ENCODE measurements at regions of chr6 and their contacts with region 1.

Region 1: GRCh38 chr6:148746363-148747144 is at the start of gene UST:
- DNase-seq: peak; percentile 75 to 86 (median 81)
- H3K4me3 ChIP-seq: peak within 1 kb of the TSS; percentile 31 to 71
- H3K4me3 Mint-ChIP-seq: peak within 1 kb of the TSS; percentile 93 to 99 (median 96)
- H3K27ac ChIP-seq: peak within 1 kb of the TSS; percentile 67
- H3K27ac Mint-ChIP-seq: peak within 1 kb of the TSS; percentile 93 to 97 (median 96)
- H3K4me1 ChIP-seq: peaks cover 35% of the 10 kb centered on the region
- H3K4me1 Mint-ChIP-seq: peaks cover 22 to 48% (median 40%) of the 10 kb centered on the region in 4 donors
- H3K27me3 ChIP-seq: no peaks in the 10 kb centered on the region
- H3K27me3 Mint-ChIP-seq: no peaks in the 10 kb centered on the region
- total RNA-seq, gene UST: 7.0 to 7.6 TPM

Region 2: DNA sequence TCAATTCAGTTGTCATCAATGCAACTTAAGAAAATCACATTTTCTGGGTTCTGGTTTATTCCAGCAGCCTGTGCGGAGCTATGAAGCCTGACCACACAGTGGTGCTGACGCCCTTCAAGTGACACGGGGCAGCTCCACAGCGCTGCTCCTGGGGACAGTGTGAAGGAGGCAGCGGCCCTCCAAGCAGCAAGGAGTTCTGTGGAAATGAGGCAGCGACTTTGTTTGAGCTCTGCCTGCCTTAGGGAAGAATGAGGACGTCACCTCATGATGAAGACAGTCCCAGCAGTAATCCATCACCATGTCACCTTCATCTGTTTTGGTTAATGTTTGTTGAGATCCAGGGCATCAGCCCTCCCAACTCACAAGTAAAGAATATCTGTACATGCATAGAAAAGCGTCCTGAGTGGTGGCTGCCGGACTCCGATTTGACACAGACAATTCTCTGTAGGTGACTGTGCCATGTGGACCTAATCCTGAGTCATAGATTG is 168.3 kb before region 1 on chr6:
- CTCF ChIA-PET with region 1: no interaction called
- POLR2A ChIA-PET with region 1: no interaction called
- intact Hi-C with region 1: loop called (anchors 1 kb)
- DNase-seq: peak in 4 of 5 donors; percentile 28 to 46 (median 41)
- H3K4me3 ChIP-seq: no peak overlapping the region
- H3K4me3 Mint-ChIP-seq: no peak overlapping the region
- H3K27ac ChIP-seq: no peak overlapping the region
- H3K27ac Mint-ChIP-seq: peak overlapping the region in 1 of 7 donors; percentile 72
- H3K4me1 ChIP-seq: no peaks in the 10 kb centered on the region
- H3K4me1 Mint-ChIP-seq: peaks cover 3 to 7% (median 5%) of the 10 kb centered on the region in 4 donors
- H3K27me3 ChIP-seq: no peaks in the 10 kb centered on the region
- H3K27me3 Mint-ChIP-seq: peaks cover 8 to 11% of the 10 kb centered on the region in 2 donors

Region 3: GRCh38 chr6:148776321-148777308 is 30.1 kb after region 1 on chr6:
- CTCF ChIA-PET with region 1: interaction called, 14 read pairs
- POLR2A ChIA-PET with region 1: interaction called, 11 read pairs
- intact Hi-C with region 1: loop called (anchors 1 kb)
- DNase-seq: no peak
- H3K4me3 ChIP-seq: no peak overlapping the region
- H3K4me3 Mint-ChIP-seq: peak overlapping the region in 3 of 8 donors; percentile 49 to 51 (median 49)
- H3K27ac ChIP-seq: no peak overlapping the region
- H3K27ac Mint-ChIP-seq: peak overlapping the region in 4 of 7 donors; percentile 5 to 72 (median 10)
- H3K4me1 ChIP-seq: peaks cover 27% of the 10 kb centered on the region
- H3K4me1 Mint-ChIP-seq: peaks cover 20 to 40% (median 35%) of the 10 kb centered on the region in 4 donors
- H3K27me3 ChIP-seq: no peaks in the 10 kb centered on the region
- H3K27me3 Mint-ChIP-seq: no peaks in the 10 kb centered on the region

Region 4: DNA sequence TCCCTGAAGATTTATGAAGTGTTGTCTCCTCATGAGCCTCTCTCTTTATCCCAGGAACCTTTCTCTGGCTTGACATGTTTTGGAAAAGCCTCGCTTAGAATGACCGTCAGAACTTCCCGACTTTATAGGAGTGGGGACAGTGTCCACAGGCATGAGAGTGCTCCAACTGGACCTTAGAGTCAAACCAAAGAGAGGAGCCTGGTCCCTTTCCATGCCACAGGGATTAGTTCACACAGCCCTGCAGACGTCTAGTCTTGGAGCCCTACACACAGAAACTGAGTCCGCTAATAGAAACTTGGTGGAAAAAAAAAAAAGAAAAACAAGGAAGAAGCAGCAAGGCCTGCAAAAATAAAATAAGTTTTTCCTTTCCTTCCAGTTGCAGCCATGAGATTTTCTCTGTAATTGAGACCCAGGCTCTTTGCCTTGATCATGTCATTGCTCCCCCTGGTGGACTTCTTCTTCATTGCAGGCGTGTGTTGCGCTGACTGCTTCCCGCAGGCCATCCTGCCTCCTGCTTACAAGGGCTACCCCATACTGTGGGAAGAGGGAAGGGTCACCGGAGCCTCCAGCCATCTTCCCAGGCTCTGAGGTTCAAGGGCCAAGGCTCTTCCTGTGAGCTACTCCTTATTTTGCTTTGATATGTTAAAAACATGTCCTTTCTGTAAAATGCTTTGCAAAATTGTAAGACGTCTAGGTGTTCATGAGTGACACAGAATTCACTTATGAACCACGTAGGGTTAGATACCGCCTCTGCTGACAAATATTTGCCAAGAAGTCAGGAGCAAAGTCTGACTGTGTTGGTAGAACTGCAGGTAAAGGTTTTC is 201.3 kb after region 1 on chr6:
- CTCF ChIA-PET with region 1: interaction called, 6 read pairs
- POLR2A ChIA-PET with region 1: interaction called, 5 read pairs
- intact Hi-C with region 1: loop called (anchors 1 kb)
- DNase-seq: peak; percentile 70 to 82 (median 79)
- H3K4me3 ChIP-seq: no peak overlapping the region
- H3K4me3 Mint-ChIP-seq: no peak overlapping the region
- H3K27ac ChIP-seq: no peak overlapping the region
- H3K27ac Mint-ChIP-seq: no peak overlapping the region
- H3K4me1 ChIP-seq: no peaks in the 10 kb centered on the region
- H3K4me1 Mint-ChIP-seq: peaks cover 0 to 5% (median 4%) of the 10 kb centered on the region in 4 donors
- H3K27me3 ChIP-seq: no peaks in the 10 kb centered on the region
- H3K27me3 Mint-ChIP-seq: no peaks in the 10 kb centered on the region

Region 5: DNA sequence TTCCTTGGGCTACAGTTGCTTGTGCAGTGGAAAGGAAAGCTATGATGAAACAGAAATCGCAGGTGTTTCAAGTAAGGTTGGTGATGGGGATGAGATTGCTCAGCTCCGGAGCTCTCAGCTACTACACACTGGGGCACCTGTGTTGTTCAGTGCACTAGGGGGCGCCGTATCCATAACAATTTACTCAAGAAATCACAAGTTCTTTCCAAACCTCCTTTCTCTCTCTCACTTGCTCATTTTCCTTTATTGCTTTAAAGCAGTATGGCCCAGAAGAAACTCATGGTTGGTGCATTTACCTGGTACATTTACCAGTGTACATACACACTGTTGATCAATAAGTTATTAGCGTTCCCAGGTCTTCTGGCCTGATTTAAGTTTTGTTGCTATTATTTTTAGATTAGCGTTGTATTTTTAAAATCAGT is 335.7 kb after region 1 on chr6:
- CTCF ChIA-PET with region 1: no interaction called
- POLR2A ChIA-PET with region 1: no interaction called
- intact Hi-C with region 1: loop called (anchors 5 kb)
- DNase-seq: peak; percentile 76 to 86 (median 77)
- H3K4me3 ChIP-seq: no peak overlapping the region
- H3K4me3 Mint-ChIP-seq: peak overlapping the region in 4 of 8 donors; percentile 0 to 46 (median 25)
- H3K27ac ChIP-seq: no peak overlapping the region
- H3K27ac Mint-ChIP-seq: peak overlapping the region in 4 of 7 donors; percentile 12 to 85 (median 68)
- H3K4me1 ChIP-seq: peaks cover 40% of the 10 kb centered on the region
- H3K4me1 Mint-ChIP-seq: peaks cover 31 to 50% (median 38%) of the 10 kb centered on the region in 4 donors
- H3K27me3 ChIP-seq: no peaks in the 10 kb centered on the region
- H3K27me3 Mint-ChIP-seq: no peaks in the 10 kb centered on the region

Measured in CD4-positive, alpha-beta memory T cell (primary cell).